Lower leg skin (tissue), 4 donors: ENCODE measurements at regions of chr12 and their contacts with region 1.

Region 1: GRCh38 chr12:131177599-131177998 is 223.9 kb downstream of the ADGRD1 start:
- DNase-seq: peak in 1 of 2 donors; percentile 53
- H3K4me3 ChIP-seq: no peak overlapping the region
- CTCF ChIP-seq: no peak
- POLR2A ChIP-seq: no peak

Region 2: GRCh38 chr12:132248453-132249167 is 1071.0 kb after region 1 on chr12:
- intact Hi-C with region 1: loop called (anchors 5 kb)
- DNase-seq: no peak
- H3K4me3 ChIP-seq: no peak overlapping the region
- CTCF ChIP-seq: no peak
- POLR2A ChIP-seq: no peak